B cell (primary cell): ENCODE measurements at regions of chr2 and their contacts with region 1.

Region 1: GRCh38 chr2:204325468-204325867 is 219.8 kb upstream of the PARD3B start:
- DNase-seq: peak; percentile 63
- ATAC-seq: no peak
- H3K4me3 ChIP-seq: no peak overlapping the region
- H3K4me3 Mint-ChIP-seq: no peak overlapping the region
- H3K27ac ChIP-seq: no peak overlapping the region
- H3K27ac Mint-ChIP-seq: no peak overlapping the region
- H3K4me1 ChIP-seq: no peaks in the 10 kb centered on the region
- H3K4me1 Mint-ChIP-seq: peaks cover 1% of the 10 kb centered on the region
- H3K27me3 ChIP-seq: no peaks in the 10 kb centered on the region
- H3K27me3 Mint-ChIP-seq: peaks cover 5% of the 10 kb centered on the region
- CTCF ChIP-seq: peak; percentile 83

Region 2: GRCh38 chr2:205814039-205814364 is 1488.5 kb after region 1 on chr2:
- CTCF ChIA-PET with region 1: no interaction called
- POLR2A ChIA-PET with region 1: no interaction called
- intact Hi-C with region 1: loop called (anchors 10 kb)
- DNase-seq: no peak
- ATAC-seq: no peak
- H3K4me3 ChIP-seq: no peak overlapping the region
- H3K4me3 Mint-ChIP-seq: no peak overlapping the region
- H3K27ac ChIP-seq: no peak overlapping the region
- H3K27ac Mint-ChIP-seq: no peak overlapping the region
- H3K4me1 ChIP-seq: no peaks in the 10 kb centered on the region
- H3K4me1 Mint-ChIP-seq: no peaks in the 10 kb centered on the region
- H3K27me3 ChIP-seq: peaks cover 0 to 4% (median 0%) of the 10 kb centered on the region in 4 experiments
- H3K27me3 Mint-ChIP-seq: peaks cover 18% of the 10 kb centered on the region
- CTCF ChIP-seq: no peak

Region 3: GRCh38 chr2:205885492-205886099 is 1560.1 kb after region 1 on chr2:
- CTCF ChIA-PET with region 1: no interaction called
- POLR2A ChIA-PET with region 1: no interaction called
- intact Hi-C with region 1: loop called (anchors 2 kb)
- DNase-seq: peak; percentile 50
- ATAC-seq: no peak
- H3K4me3 ChIP-seq: no peak overlapping the region
- H3K4me3 Mint-ChIP-seq: no peak overlapping the region
- H3K27ac ChIP-seq: no peak overlapping the region
- H3K27ac Mint-ChIP-seq: no peak overlapping the region
- H3K4me1 ChIP-seq: no peaks in the 10 kb centered on the region
- H3K4me1 Mint-ChIP-seq: no peaks in the 10 kb centered on the region
- H3K27me3 ChIP-seq: peaks cover 0 to 5% (median 0%) of the 10 kb centered on the region in 4 experiments
- H3K27me3 Mint-ChIP-seq: peaks cover 16% of the 10 kb centered on the region
- CTCF ChIP-seq: peak; percentile 71

Region 4: DNA sequence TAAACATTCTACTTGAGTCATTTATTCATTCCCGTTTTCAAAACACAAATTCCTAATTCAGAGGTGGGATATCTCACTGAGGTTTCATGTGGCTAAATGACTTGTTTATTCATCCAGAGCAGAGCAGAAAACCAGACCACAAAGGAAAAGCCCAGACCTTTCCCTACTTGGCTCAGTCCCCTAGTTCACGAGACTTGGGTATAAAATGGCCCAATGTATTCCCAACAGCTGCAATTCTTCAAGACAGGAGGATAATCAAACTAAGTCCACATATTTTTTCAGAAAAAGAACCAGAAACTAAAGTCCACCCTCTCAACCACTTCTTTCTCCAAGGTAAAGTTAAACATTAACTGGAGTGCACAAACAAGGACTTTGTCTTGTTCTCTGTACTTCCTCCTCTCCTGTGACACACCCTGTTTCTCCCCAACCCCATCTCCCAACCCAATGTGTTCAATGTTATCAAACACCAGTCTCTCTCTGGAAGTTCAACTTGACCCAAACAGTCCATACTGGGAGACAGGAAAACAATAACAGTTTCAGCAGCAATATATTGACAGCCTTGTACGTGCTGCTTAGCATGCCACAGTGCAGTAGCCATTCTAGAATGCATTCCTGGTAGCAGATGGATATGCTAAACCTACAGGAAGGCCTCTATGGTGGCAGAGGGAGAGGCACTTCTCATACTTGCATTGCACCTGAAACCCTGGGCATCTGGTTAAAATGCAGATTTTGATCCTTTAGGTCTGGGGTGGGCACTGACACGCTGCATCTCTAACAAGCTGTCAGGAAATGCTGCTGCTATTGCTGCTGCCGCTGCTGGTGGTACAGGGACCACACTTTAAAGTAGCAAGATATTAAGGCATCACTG is 1649.8 kb after region 1 on chr2:
- CTCF ChIA-PET with region 1: no interaction called
- POLR2A ChIA-PET with region 1: no interaction called
- intact Hi-C with region 1: no loop called
- DNase-seq: no peak
- ATAC-seq: no peak
- H3K4me3 ChIP-seq: no peak overlapping the region
- H3K4me3 Mint-ChIP-seq: no peak overlapping the region
- H3K27ac ChIP-seq: no peak overlapping the region
- H3K27ac Mint-ChIP-seq: no peak overlapping the region
- H3K4me1 ChIP-seq: no peaks in the 10 kb centered on the region
- H3K4me1 Mint-ChIP-seq: no peaks in the 10 kb centered on the region
- H3K27me3 ChIP-seq: no peaks in the 10 kb centered on the region
- H3K27me3 Mint-ChIP-seq: peaks cover 12% of the 10 kb centered on the region
- CTCF ChIP-seq: no peak